A673 (cell line): ENCODE measurements at regions of chr14 and their contacts with region 1.

Region 1: DNA sequence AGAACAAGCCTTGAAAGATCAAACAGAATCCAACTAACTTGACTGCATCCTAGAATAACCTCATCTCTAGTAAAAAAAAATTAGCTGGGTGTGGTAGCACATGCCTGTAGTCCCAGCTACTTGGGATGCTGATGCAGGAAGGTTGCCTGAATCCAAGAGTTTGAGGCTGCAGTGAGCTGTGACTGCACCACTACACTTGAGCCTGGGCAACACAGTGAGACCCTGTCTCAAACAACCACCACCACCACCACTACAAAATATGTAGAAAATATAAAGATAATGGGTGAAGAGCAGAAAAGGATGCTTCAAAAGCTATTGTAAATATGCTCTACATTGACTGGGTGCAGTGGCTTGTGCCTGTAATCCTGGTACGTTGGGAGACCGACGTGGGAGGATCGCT is 27.3 kb downstream of the SUPT16H start:
- DNase-seq: no peak
- H3K4me3 ChIP-seq: no peak overlapping the region
- H3K27ac ChIP-seq: no peak overlapping the region
- H3K4me1 ChIP-seq: no peaks in the 10 kb centered on the region
- H3K27me3 ChIP-seq: no peaks in the 10 kb centered on the region
- CTCF ChIP-seq: no peak

Region 2: DNA sequence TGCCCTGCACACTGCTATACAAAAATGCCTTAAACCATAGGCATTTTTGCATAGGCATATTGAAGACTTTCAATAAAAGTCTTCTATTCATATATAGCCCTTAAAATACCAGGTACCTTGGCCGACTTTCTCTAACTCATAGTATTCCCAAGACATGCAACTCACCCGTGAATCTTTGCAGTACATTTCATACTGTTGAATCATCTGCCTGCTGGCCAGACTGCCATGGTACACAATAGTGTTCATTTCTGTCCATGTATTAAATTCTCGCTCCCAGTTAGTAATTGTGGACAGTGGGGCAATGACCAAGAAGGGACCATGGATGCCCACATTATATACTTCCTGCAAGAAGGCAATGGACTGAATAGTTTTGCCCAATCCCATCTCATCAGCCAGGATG is 51.6 kb after region 1 on chr14:
- CTCF ChIA-PET with region 1: no interaction called
- POLR2A ChIA-PET with region 1: interaction called, 3 read pairs
- intact Hi-C with region 1: loop called (anchors 5 kb)
- DNase-seq: no peak
- H3K4me3 ChIP-seq: no peak overlapping the region
- H3K27ac ChIP-seq: no peak overlapping the region
- H3K4me1 ChIP-seq: no peaks in the 10 kb centered on the region
- H3K27me3 ChIP-seq: no peaks in the 10 kb centered on the region
- CTCF ChIP-seq: no peak